PC-9 (cell line): ENCODE measurements at regions of chr6 and their contacts with region 1.

Region 1: GRCh38 chr6:111799576-111800258 is 73.5 kb downstream of the FYN start:
- DNase-seq: no peak
- H3K4me3 ChIP-seq: no peak overlapping the region
- H3K27ac ChIP-seq: peak overlapping the region; percentile 74
- H3K4me1 ChIP-seq: peaks cover 72% of the 10 kb centered on the region
- H3K27me3 ChIP-seq: no peaks in the 10 kb centered on the region
- CTCF ChIP-seq: no peak

Region 2: DNA sequence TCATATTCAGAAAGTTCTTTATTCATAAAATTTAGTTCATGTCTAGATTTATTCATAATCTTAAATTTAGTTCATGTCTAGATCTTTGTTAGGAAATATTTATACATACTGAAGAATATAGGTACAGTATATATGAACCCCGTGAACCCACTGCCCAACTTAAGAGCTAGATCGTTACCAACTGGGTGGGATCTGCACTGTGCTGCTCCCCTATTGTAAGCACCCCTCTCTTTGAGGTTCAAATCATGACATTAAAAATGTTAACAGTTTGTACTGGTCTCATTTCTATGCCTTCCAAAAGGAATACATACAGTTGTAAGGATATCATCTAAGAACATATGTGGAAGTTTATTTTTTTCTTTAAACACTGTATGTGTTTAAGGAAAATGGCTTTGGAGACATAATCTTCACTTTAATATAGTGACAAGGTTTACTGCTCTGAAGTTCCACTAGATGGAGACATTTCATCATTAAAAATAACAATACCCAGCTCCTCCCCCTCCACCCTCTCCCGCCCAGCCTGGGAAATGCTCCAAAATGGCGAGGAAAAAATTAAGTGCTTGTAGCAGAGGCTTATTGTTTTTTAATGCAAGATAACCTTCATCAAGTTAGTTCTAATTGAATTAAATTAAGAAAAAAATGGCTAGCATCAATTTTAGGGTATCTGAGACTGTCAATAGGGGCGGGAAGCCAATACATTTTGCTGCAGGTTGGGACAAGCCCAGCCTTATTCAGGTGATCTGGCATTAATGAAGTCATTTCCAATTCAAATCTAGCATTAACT is 89.9 kb before region 1 on chr6:
- CTCF ChIA-PET with region 1: no interaction called
- POLR2A ChIA-PET with region 1: no interaction called
- intact Hi-C with region 1: loop called (anchors 5 kb)
- DNase-seq: peak; percentile 54 to 56
- H3K4me3 ChIP-seq: no peak overlapping the region
- H3K27ac ChIP-seq: no peak overlapping the region
- H3K4me1 ChIP-seq: 0 out of 2 replicates have a peak, but pooled peaks cover 5% of the 10 kb centered on the region
- H3K27me3 ChIP-seq: no peaks in the 10 kb centered on the region
- CTCF ChIP-seq: peak; percentile 91